ENCODE measurements at regions of chr5 and their contacts with region 1.

Region 1: DNA sequence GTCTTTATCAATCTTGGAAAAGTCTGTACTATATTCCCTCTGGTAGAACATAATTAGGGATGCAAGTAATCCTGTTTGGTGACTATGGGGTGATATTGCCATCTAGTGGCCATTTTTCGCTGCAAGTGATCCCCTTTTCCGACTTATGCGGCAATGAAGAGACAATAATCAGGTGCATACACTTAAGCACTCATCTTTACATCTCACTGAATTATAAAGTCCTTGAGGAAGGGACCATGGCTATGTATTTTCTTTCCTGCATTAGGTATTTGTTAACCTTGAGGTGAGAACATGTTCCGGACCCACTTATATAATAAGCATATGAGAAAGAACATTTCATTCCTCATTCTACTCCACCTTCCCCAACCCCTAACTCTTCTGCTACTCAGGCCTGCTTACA is 19.6 kb upstream of the LIX1 start:
- DNase-seq: peak; percentile 72
- ATAC-seq: peak; percentile 60
- H3K4me3 Mint-ChIP-seq: no peak overlapping the region
- H3K27ac Mint-ChIP-seq: no peak overlapping the region
- H3K4me1 Mint-ChIP-seq: peaks cover 8% of the 10 kb centered on the region
- H3K27me3 Mint-ChIP-seq: no peaks in the 10 kb centered on the region

Region 2: DNA sequence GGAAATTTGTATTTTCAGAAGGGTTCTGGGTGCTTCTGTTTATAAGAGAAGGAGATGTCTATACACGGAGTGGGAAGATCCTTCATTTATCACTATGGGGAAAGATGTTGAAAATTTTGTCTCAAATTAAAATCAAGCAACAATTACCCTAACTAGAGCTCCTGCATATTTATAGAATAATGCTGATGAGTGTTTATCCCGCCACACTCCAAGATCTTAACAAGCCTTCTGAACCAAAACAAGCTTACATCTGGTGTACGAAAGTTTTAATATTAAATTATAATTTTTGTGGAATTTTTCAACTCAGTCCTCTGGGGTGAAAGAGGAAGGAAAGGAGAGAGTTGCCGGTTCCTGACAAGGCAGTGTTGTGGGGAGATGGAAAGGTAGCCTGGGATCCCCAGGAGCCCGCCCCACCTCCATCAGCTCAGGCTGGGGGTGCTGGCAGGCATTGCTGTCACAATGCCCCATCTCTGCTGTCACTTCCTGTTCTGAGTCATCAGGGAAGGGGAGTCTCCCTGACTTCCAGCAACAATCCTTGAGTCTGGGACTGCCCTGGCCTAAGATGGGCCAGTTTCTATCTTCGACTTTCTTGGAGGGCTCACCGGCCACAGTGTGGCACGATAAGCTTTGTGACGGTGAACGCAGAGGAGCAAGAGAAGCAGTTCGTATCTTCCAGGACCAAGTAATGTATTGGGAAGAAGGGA is 418.8 kb before region 1 on chr5:
- CTCF ChIA-PET with region 1: interaction called, 10 read pairs
- POLR2A ChIA-PET with region 1: no interaction called
- DNase-seq: no peak
- ATAC-seq: no peak
- H3K4me3 Mint-ChIP-seq: no peak overlapping the region
- H3K27ac Mint-ChIP-seq: no peak overlapping the region
- H3K4me1 Mint-ChIP-seq: peaks cover 2% of the 10 kb centered on the region
- H3K27me3 Mint-ChIP-seq: no peaks in the 10 kb centered on the region

Region 3: DNA sequence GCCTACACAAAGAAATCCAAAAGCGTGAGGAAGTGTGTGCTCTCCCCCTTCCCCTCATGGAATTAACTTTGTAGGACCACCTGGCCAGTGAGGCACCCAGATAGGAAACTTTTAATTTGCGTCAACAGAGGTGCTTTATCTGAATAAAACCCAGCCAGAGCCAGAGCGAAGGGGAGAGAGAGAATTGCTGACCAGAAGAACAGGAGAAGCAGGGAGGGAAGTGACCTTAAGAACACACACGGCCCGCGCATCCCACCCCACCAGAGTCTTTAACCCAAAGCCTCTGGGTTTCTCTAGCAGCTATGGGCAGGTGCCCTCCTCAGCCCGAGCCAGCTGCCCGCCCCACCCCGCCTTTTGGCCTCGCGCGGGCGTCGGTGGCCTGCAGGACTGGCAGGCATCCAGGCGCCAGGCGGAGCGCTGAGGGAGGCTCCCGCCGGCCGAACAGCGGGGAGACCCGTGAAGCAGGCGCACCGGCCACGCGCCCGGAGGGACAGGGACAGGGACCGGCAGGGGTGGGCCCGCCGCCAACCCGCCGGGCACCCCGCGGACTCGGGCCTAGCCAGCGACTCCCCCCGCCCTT is 354.9 kb before region 1 on chr5:
- CTCF ChIA-PET with region 1: interaction called, 33 read pairs
- POLR2A ChIA-PET with region 1: no interaction called
- DNase-seq: peak; percentile 54
- ATAC-seq: peak; percentile 28
- H3K4me3 Mint-ChIP-seq: peak overlapping the region; percentile 90
- H3K27ac Mint-ChIP-seq: peak overlapping the region; percentile 99
- H3K4me1 Mint-ChIP-seq: peaks cover 73% of the 10 kb centered on the region
- H3K27me3 Mint-ChIP-seq: no peaks in the 10 kb centered on the region

Region 4: GRCh38 chr5:97044052-97044451 is 118.0 kb before region 1 on chr5:
- CTCF ChIA-PET with region 1: interaction called, 23 read pairs
- POLR2A ChIA-PET with region 1: no interaction called
- DNase-seq: no peak
- ATAC-seq: no peak
- H3K4me3 Mint-ChIP-seq: no peak overlapping the region
- H3K27ac Mint-ChIP-seq: no peak overlapping the region
- H3K4me1 Mint-ChIP-seq: no peaks in the 10 kb centered on the region
- H3K27me3 Mint-ChIP-seq: peaks cover 11% of the 10 kb centered on the region

Region 5: GRCh38 chr5:97127727-97128126 is 34.3 kb before region 1 on chr5:
- CTCF ChIA-PET with region 1: interaction called, 16 read pairs
- POLR2A ChIA-PET with region 1: no interaction called
- DNase-seq: no peak
- ATAC-seq: no peak
- H3K4me3 Mint-ChIP-seq: no peak overlapping the region
- H3K27ac Mint-ChIP-seq: no peak overlapping the region
- H3K4me1 Mint-ChIP-seq: peaks cover 2% of the 10 kb centered on the region
- H3K27me3 Mint-ChIP-seq: peaks cover 29% of the 10 kb centered on the region

Region 6: DNA sequence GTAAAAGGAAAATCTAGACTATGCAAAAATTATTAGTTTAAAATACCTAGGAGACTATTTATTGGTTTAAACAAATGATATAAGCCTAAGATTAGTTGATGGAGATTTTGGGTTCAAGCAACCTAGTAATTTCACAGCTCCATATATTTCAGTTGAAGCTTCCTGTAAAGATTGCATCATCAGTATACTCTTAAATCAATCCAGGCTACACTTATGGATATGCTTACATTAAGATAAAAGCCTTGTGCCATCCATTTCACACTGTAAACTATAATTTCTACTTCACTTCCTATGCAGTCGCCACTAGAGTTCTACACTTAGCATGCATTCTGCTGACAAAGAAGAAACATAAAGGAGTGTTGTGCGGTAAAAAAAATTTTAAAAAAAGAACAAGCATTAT is 12.3 kb before region 1 on chr5:
- CTCF ChIA-PET with region 1: interaction called, 79 read pairs
- POLR2A ChIA-PET with region 1: no interaction called
- DNase-seq: no peak
- ATAC-seq: no peak
- H3K4me3 Mint-ChIP-seq: no peak overlapping the region
- H3K27ac Mint-ChIP-seq: no peak overlapping the region
- H3K4me1 Mint-ChIP-seq: no peaks in the 10 kb centered on the region
- H3K27me3 Mint-ChIP-seq: peaks cover 7% of the 10 kb centered on the region

Region 7: GRCh38 chr5:97183100-97183929 is 21.3 kb after region 1 on chr5 and contains the start of gene RIOK2:
- CTCF ChIA-PET with region 1: interaction called, 12 read pairs
- POLR2A ChIA-PET with region 1: no interaction called
- DNase-seq: peak; percentile 96
- ATAC-seq: peak; percentile 93
- H3K4me3 Mint-ChIP-seq: peak within 1 kb of the TSS; percentile 91
- H3K27ac Mint-ChIP-seq: peak within 1 kb of the TSS; percentile 100
- H3K4me1 Mint-ChIP-seq: peaks cover 31% of the 10 kb centered on the region
- H3K27me3 Mint-ChIP-seq: peaks cover 4% of the 10 kb centered on the region
- total RNA-seq, gene RIOK2: 26.3 to 29.1 TPM